ENCODE measurements at regions of chr1 and their contacts with region 1.

Region 1: DNA sequence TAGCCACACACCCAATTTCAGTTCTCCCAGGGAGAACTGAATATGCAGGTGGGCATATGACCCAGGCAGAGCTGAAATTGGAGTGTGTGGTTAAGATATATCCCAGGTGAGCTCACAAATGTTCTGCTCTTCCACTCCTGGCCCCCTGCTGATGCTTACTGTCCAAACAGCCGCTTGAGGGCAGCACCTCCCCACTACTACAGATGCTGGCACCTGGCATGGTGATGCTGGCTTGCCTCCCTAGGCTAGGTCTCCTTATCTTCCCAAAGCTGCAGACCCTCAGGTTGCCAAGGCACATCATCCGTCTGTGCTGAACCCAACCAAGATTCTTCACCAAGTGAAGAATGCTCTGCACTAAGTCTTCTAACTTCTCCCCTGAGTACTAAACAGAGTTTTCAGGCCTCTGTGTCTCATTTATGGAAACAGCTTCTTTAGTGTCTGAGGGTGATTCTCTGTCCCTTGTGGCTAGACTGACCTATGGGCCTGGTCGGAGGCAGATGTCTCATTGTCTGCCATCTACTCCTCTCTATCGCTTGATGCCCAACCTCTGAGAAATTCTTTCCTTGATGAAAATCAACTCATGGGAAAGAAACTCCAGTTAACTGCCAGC is 27.2 kb downstream of the XCL1 start:
- DNase-seq: peak; percentile 53
- H3K4me3 ChIP-seq: no peak overlapping the region
- H3K27ac ChIP-seq: no peak overlapping the region
- H3K4me1 ChIP-seq: no peaks in the 10 kb centered on the region
- H3K27me3 ChIP-seq: no peaks in the 10 kb centered on the region
- CTCF ChIP-seq: peak; percentile 89 to 93

Region 2: GRCh38 chr1:167428395-167428794 is 1175.2 kb before region 1 on chr1:
- CTCF ChIA-PET with region 1: no interaction called
- dilution Hi-C with region 1: no loop called
- in situ Hi-C with region 1: no loop called
- intact Hi-C with region 1: no loop called
- DNase-seq: no peak
- H3K4me3 ChIP-seq: no peak overlapping the region
- H3K27ac ChIP-seq: no peak overlapping the region
- H3K4me1 ChIP-seq: peaks cover 9% of the 10 kb centered on the region
- H3K27me3 ChIP-seq: no peaks in the 10 kb centered on the region
- CTCF ChIP-seq: no peak

Region 3: DNA sequence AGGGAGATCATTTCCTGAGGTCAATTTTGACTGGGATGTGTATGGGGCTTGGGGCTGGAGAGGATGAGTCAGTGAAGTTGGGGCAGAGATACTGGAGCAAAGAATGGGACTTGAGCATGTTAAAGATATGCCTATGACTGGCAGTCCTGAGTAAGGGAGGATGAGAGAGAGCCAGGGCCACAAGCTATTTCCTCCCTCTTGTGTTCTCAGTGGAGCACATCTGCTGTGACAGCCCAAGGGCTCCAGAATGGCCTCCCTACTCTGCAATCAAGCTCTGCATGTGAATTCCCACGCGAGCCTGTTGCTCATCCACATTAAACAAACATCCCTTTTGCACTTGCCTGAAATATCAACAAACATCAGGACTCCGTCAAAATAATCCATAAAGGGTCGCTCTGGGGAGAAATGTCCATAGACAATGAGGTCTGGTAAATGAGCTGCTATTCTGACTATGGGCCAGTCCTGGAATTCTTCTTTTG is 698.9 kb before region 1 on chr1:
- CTCF ChIA-PET with region 1: no interaction called
- dilution Hi-C with region 1: no loop called
- in situ Hi-C with region 1: no loop called
- intact Hi-C with region 1: no loop called
- DNase-seq: peak; percentile 32
- H3K4me3 ChIP-seq: no peak overlapping the region
- H3K27ac ChIP-seq: no peak overlapping the region
- H3K4me1 ChIP-seq: no peaks in the 10 kb centered on the region
- H3K27me3 ChIP-seq: no peaks in the 10 kb centered on the region
- CTCF ChIP-seq: no peak

Region 4: GRCh38 chr1:168342572-168343280 is 260.9 kb before region 1 on chr1:
- CTCF ChIA-PET with region 1: interaction called, 5 read pairs
- dilution Hi-C with region 1: no loop called
- in situ Hi-C with region 1: no loop called
- intact Hi-C with region 1: loop called (anchors 1 kb)
- DNase-seq: peak; percentile 69
- H3K4me3 ChIP-seq: no peak overlapping the region
- H3K27ac ChIP-seq: no peak overlapping the region
- H3K4me1 ChIP-seq: peaks cover 14% of the 10 kb centered on the region
- H3K27me3 ChIP-seq: no peaks in the 10 kb centered on the region
- CTCF ChIP-seq: peak; percentile 68 to 77

Region 5: DNA sequence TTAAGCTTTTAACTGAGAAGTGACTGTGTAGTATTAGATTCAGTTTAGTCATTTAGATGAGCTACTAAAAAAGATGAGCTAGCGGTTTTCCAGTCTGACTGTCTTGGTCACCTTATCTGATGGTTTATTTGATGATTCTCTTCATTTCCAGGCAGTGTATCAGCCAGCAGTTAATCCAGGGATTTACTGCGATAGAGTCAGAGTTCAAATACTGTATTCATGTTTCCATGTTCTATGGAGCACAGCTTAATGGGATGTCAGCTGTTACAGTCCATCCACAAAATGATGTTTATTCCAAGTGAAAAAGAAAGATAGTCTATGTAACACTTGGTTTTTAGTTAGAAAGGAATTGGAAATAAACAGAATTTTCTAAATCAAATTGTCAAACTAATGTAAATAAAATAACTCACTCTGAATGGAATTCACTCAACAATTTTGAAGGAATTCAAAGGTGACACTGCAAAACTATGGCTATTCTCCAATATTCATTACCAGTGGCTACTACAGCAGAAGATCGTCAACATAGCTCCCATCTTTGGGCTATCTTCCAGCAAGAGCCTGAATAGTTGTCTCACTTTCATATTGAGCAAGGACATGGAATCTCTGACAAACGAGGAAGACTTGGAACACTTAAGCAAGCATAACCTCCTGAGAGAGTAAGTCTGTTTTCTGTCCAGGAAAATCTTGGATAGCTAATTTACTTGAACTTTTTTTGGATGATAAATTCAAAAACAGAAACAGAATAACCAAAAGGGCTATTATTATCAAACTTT is 180.0 kb after region 1 on chr1:
- CTCF ChIA-PET with region 1: no interaction called
- dilution Hi-C with region 1: no loop called
- in situ Hi-C with region 1: no loop called
- intact Hi-C with region 1: loop called (anchors 10 kb)
- DNase-seq: no peak
- H3K4me3 ChIP-seq: no peak overlapping the region
- H3K27ac ChIP-seq: no peak overlapping the region
- H3K4me1 ChIP-seq: no peaks in the 10 kb centered on the region
- H3K27me3 ChIP-seq: no peaks in the 10 kb centered on the region
- CTCF ChIP-seq: no peak

Region 6: DNA sequence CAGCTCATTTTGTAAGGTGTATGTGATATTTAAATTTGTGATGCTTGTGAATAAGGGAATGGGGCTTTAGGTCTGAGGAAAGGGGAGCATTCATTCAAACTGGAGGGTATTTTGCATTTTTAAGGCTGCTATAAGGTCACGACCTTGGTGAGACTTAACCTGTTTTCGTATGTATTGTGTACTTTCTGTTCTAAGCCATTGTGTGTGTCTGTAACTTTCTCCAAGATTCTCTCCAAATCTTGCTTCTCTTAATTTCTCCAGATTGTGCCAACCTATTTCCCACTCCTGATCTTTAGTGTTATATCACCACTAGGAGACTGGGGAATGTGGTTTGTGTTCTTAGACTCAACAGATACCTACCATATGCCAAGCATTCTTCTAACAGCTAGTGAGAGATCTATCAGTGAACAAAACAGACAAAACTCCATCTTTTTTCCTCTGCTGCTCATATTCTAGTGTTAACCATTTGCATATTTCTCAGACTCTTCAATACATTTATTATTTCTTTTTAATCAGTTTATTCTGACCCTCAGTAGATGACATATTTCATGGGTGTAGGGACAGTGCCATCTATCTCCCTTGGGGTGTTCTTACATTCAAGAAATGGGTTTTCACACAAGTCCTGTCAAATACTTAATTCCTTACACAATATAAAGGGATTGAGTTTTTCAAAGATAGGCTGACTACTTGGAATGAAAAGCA is 530.3 kb after region 1 on chr1:
- CTCF ChIA-PET with region 1: no interaction called
- dilution Hi-C with region 1: no loop called
- in situ Hi-C with region 1: loop called in 1 of 2 experiments (anchors 10 kb)
- intact Hi-C with region 1: loop called (anchors 2 kb)
- DNase-seq: no peak
- H3K4me3 ChIP-seq: no peak overlapping the region
- H3K27ac ChIP-seq: no peak overlapping the region
- H3K4me1 ChIP-seq: peaks cover 13% of the 10 kb centered on the region
- H3K27me3 ChIP-seq: no peaks in the 10 kb centered on the region
- CTCF ChIP-seq: peak; percentile 61 to 74

Region 7: GRCh38 chr1:169466259-169467230 is 862.9 kb after region 1 on chr1:
- CTCF ChIA-PET with region 1: interaction called, 3 read pairs
- dilution Hi-C with region 1: no loop called
- in situ Hi-C with region 1: no loop called
- intact Hi-C with region 1: loop called (anchors 5 kb)
- DNase-seq: peak; percentile 23
- H3K4me3 ChIP-seq: no peak overlapping the region
- H3K27ac ChIP-seq: no peak overlapping the region
- H3K4me1 ChIP-seq: no peaks in the 10 kb centered on the region
- H3K27me3 ChIP-seq: no peaks in the 10 kb centered on the region
- CTCF ChIP-seq: peak; percentile 29 to 48

Region 8: GRCh38 chr1:169711469-169712281 is 1108.1 kb after region 1 on chr1 and contains the start of gene SELL:
- CTCF ChIA-PET with region 1: no interaction called
- dilution Hi-C with region 1: no loop called
- in situ Hi-C with region 1: no loop called
- intact Hi-C with region 1: loop called (anchors 5 kb)
- DNase-seq: peak; percentile 61
- H3K4me3 ChIP-seq: peak within 1 kb of the TSS; percentile 22 to 51 (median 46)
- H3K27ac ChIP-seq: no peak within 1 kb of the TSS
- H3K4me1 ChIP-seq: no peaks in the 10 kb centered on the region
- H3K27me3 ChIP-seq: peaks cover 3% of the 10 kb centered on the region
- CTCF ChIP-seq: peak; percentile 93 to 94
- total RNA-seq, gene SELL: 0.17 TPM in 1 of 2 donors, not detected in the other

Measured in mammary epithelial cell (primary cell).